Heart left ventricle (tissue), 16 donors: ENCODE measurements at regions of chr4 and their contacts with region 1.

Region 1: DNA sequence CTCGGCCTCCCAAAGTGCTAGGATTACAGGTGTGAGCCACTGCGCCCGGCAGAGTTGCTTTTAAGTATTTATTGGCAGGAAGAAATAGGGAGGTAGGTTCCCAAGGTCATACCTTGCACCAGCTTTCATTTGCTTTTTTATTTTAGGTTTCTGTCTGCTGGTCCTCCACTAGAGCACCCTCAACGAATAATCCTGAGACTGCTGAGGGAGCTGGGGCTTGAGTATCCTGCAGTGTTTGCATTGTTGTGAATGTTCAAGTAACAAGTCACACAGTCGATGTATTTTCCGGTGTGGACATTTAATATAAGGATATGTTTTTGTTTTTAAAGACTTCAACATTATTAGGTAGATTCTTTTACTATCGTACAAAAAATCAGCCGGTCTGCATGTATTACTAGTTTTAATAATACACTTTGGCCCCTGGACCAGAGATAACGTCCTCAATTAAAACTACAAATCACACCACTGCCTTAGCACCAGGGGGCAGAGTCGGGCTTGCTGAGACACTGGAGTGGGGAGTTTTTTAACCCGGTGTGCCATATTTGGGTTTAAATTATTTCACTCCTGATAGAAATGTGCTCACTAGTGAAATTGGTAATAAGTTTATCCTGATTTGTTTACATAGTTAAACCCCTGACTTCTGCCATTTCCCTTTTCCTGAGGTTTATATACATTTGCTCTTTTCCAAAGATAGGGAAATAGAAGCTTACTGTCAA is 11.6 kb downstream of the SMIM20 start:
- DNase-seq: peak in 3 of 5 donors; percentile 38 to 58 (median 44)
- ATAC-seq: peak in 1 of 4 donors; percentile 45
- H3K4me3 ChIP-seq: no peak overlapping the region
- H3K27ac ChIP-seq: no peak overlapping the region
- H3K4me1 ChIP-seq: peaks cover 0 to 52% (median 31%) of the 10 kb centered on the region in 12 donors
- H3K27me3 ChIP-seq: no peaks in the 10 kb centered on the region
- CTCF ChIP-seq: peak; percentile 28 to 66 (median 54)
- POLR2A ChIP-seq: no peak

Region 2: GRCh38 chr4:25654971-25655963 is 270.4 kb before region 1 on chr4 and contains the start of gene SLC34A2:
- intact Hi-C with region 1: no loop called
- DNase-seq: no peak
- ATAC-seq: no peak
- H3K4me3 ChIP-seq: peak within 1 kb of the TSS in 3 of 12 donors; percentile 6 to 15 (median 13)
- H3K27ac ChIP-seq: no peak within 1 kb of the TSS
- H3K4me1 ChIP-seq: peaks cover 0 to 12% (median 0%) of the 10 kb centered on the region in 12 donors
- H3K27me3 ChIP-seq: peaks cover 13 to 50% (median 29%) of the 10 kb centered on the region in 9 donors
- CTCF ChIP-seq: no peak
- POLR2A ChIP-seq: no peak
- total RNA-seq, gene SLC34A2: 5.5 TPM in 1 of 9 donors, not detected in the others

Region 3: DNA sequence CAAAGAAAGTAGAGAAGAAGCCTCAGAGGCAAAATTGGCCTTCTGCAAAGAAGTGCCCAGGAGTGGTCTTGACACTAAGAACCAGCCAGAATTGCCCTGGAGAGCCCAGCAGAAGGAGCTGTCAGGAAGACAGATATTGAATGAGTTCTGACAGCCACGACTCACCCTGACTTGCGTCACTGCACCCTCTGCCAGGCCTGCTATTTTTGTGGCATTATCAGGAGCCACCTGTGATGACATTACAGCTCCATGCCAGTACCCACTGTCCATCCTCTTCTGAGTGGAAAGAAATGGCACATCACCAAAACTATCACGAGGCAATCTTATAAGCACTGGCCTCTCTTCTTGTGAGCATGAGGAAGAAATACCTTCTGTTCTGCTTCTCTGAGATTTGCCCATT is 56.1 kb after region 1 on chr4:
- intact Hi-C with region 1: loop called in 5 of 10 experiments (anchors 5 kb)
- DNase-seq: peak in 2 of 5 donors; percentile 68 to 84
- ATAC-seq: peak; percentile 88 to 97 (median 95)
- H3K4me3 ChIP-seq: no peak overlapping the region
- H3K27ac ChIP-seq: no peak overlapping the region
- H3K4me1 ChIP-seq: no peaks in the 10 kb centered on the region
- H3K27me3 ChIP-seq: no peaks in the 10 kb centered on the region
- CTCF ChIP-seq: no peak
- POLR2A ChIP-seq: no peak

Region 4: DNA sequence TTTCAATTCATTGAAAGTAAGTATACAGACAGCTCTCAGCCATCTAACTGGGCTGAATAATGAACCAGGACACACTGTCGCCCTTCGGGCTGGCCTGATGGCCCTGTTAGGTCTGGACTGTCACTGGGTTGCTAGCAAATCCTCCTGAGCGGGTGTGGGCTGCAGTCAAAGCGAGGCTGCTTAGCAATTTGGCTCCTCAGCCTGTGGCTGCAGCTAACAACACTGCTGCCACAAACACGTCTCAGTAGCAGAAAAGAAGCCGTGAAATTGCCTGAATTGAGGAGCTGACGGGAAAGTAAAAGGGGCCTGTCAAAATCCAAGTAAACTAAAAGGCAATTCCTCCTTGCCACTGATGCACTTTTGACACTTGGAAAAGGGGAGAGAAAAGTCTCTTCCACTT is 61.2 kb after region 1 on chr4:
- intact Hi-C with region 1: loop called in 5 of 10 experiments (anchors 5 kb)
- DNase-seq: peak in 1 of 5 donors; percentile 10
- ATAC-seq: no peak
- H3K4me3 ChIP-seq: no peak overlapping the region
- H3K27ac ChIP-seq: no peak overlapping the region
- H3K4me1 ChIP-seq: peaks cover 0 to 6% (median 0%) of the 10 kb centered on the region in 12 donors
- H3K27me3 ChIP-seq: no peaks in the 10 kb centered on the region
- CTCF ChIP-seq: no peak
- POLR2A ChIP-seq: no peak